Gastrocnemius medialis (tissue), 4 donors: ENCODE measurements at regions of chr9 and their contacts with region 1.

Region 1: GRCh38 chr9:84170521-84171141 is 169.9 kb downstream of the SLC28A3 start:
- DNase-seq: peak; percentile 82 to 90
- ATAC-seq: peak; percentile 77 to 78
- H3K4me3 ChIP-seq: no peak overlapping the region
- H3K27ac ChIP-seq: peak overlapping the region; percentile 65 to 75 (median 68)
- H3K4me1 ChIP-seq: peaks cover 18 to 20% of the 10 kb centered on the region in 2 donors
- H3K27me3 ChIP-seq: no peaks in the 10 kb centered on the region
- CTCF ChIP-seq: peak in 2 of 5 experiments; percentile 7 to 25
- POLR2A ChIP-seq: no peak

Region 2: DNA sequence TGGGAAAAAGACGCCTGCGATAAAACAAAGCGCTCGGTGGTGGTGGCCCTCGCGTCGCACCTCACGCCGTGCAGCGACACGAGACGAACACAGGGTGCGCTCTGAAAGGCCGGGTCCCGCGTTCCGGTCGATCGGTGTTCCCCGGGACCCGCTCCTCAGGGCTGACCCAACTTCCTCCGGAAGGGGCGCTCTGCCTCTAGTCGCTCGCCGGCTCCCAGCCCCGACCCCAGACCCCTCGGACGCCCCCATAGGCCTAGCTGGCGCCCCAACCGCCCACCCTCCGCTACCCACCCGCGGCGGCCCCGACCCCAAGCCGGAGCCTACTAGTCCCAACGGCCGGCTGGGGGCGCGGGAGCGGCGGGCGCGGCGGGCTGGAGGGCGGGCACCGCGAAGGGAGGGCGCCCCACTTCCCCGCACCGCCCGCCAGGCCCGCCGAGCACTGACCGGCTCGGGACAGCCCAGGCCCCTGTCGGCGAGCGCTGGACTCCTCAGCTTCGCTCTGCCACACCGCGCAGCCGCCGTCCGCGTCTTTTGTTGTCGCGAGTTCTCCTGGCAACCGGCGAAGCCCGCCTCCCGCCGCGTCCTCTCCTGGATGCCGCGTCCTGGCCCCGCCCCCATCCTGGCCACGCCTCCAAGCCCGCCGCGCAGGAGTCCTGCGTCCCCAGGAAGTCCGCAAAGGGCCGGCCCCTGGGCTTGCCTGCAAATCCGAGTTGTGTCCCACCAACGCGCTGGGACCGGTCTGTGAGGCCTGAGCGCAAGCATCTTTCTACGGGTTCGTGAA is 249.5 kb before region 1 on chr9 and contains the start of gene KIF27:
- in situ Hi-C with region 1: no loop called
- intact Hi-C with region 1: loop called (anchors 5 kb)
- DNase-seq: peak; percentile 96 to 98
- ATAC-seq: peak; percentile 95
- H3K4me3 ChIP-seq: peak within 1 kb of the TSS; percentile 70 to 87 (median 80)
- H3K27ac ChIP-seq: peak within 1 kb of the TSS; percentile 91 to 95 (median 94)
- H3K4me1 ChIP-seq: peaks cover 4 to 10% of the 10 kb centered on the region in 2 donors
- H3K27me3 ChIP-seq: no peaks in the 10 kb centered on the region
- CTCF ChIP-seq: peak; percentile 44 to 62 (median 52)
- POLR2A ChIP-seq: peak; percentile 85 to 88
- total RNA-seq, gene KIF27: 1.7 to 4.1 (median 2.2) TPM

Region 3: DNA sequence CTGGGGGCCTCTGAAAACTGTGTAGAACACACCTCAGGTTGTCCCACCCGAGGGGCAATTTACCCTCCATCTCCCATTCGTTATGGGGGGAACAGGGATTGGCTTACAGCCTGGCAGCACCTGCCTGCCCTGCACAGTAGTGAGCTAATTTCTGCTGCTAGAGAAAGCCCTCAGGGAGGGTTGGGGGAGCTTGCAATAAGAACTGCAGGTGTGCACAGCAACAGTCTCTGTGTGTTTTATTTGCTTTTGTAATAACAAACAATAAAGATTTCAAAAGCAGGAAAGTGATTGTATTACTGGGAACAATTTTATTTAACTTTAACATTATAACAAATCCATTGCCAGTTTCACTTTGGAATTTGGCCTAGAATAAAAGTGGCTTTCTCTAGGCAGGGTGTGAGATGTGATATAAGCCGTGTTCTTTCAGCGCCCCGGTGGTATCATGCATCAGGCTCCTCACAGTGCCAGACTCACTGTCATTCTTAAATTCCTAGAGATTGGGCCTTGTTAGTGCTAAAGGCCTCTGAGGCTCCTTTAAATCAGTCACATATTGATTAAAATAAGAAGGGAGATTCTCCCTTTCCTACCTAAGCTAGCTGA is 108.9 kb before region 1 on chr9:
- in situ Hi-C with region 1: no loop called
- intact Hi-C with region 1: loop called (anchors 5 kb)
- DNase-seq: no peak
- ATAC-seq: no peak
- H3K4me3 ChIP-seq: no peak overlapping the region
- H3K27ac ChIP-seq: peak overlapping the region; percentile 41 to 69 (median 61)
- H3K4me1 ChIP-seq: peaks cover 28 to 34% of the 10 kb centered on the region in 2 donors
- H3K27me3 ChIP-seq: no peaks in the 10 kb centered on the region
- CTCF ChIP-seq: no peak
- POLR2A ChIP-seq: no peak

Region 4: GRCh38 chr9:84139296-84140070 is 31.1 kb before region 1 on chr9:
- in situ Hi-C with region 1: no loop called
- intact Hi-C with region 1: loop called (anchors 5 kb)
- DNase-seq: peak in 1 of 2 donors; percentile 15
- ATAC-seq: peak in 1 of 2 donors; percentile 43
- H3K4me3 ChIP-seq: no peak overlapping the region
- H3K27ac ChIP-seq: no peak overlapping the region
- H3K4me1 ChIP-seq: peaks cover 12 to 13% of the 10 kb centered on the region in 2 donors
- H3K27me3 ChIP-seq: peaks cover 28 to 41% (median 31%) of the 10 kb centered on the region in 3 donors
- CTCF ChIP-seq: no peak
- POLR2A ChIP-seq: no peak

Region 5: GRCh38 chr9:84207491-84207951 is 36.9 kb after region 1 on chr9:
- in situ Hi-C with region 1: no loop called
- intact Hi-C with region 1: no loop called
- DNase-seq: no peak
- ATAC-seq: peak in 1 of 2 donors; percentile 39
- H3K4me3 ChIP-seq: peak overlapping the region in 1 of 4 donors; percentile 34
- H3K27ac ChIP-seq: no peak overlapping the region
- H3K4me1 ChIP-seq: no peaks in the 10 kb centered on the region
- H3K27me3 ChIP-seq: no peaks in the 10 kb centered on the region
- CTCF ChIP-seq: no peak
- POLR2A ChIP-seq: no peak

Region 6: GRCh38 chr9:84570482-84571154 is 400.0 kb after region 1 on chr9:
- in situ Hi-C with region 1: no loop called
- intact Hi-C with region 1: no loop called
- DNase-seq: no peak
- ATAC-seq: no peak
- H3K4me3 ChIP-seq: no peak overlapping the region
- H3K27ac ChIP-seq: no peak overlapping the region
- H3K4me1 ChIP-seq: no peaks in the 10 kb centered on the region
- H3K27me3 ChIP-seq: no peaks in the 10 kb centered on the region
- CTCF ChIP-seq: no peak
- POLR2A ChIP-seq: no peak